ENCODE measurements at regions of chr3 and their contacts with region 1.

Region 1: GRCh38 chr3:138594150-138594934 is at the start of gene CEP70:
- DNase-seq: peak; percentile 88 to 94
- ATAC-seq: peak; percentile 96 to 97
- H3K4me3 ChIP-seq: peak within 1 kb of the TSS; percentile 63 to 86 (median 80)
- H3K27ac ChIP-seq: peak within 1 kb of the TSS; percentile 87 to 95 (median 92)
- H3K4me1 ChIP-seq: peaks cover 0 to 9% of the 10 kb centered on the region in 2 donors
- H3K27me3 ChIP-seq: no peaks in the 10 kb centered on the region
- CTCF ChIP-seq: peak; percentile 88 to 96 (median 91)
- POLR2A ChIP-seq: peak; percentile 87 to 94
- total RNA-seq, gene CEP70: 9.8 to 17.4 (median 12.3) TPM

Region 2: GRCh38 chr3:138186803-138187295 is 407.5 kb before region 1 on chr3:
- in situ Hi-C with region 1: no loop called
- intact Hi-C with region 1: loop called (anchors 5 kb)
- DNase-seq: peak; percentile 81 to 91
- ATAC-seq: peak; percentile 26 to 35
- H3K4me3 ChIP-seq: peak overlapping the region; percentile 72 to 99 (median 92)
- H3K27ac ChIP-seq: peak overlapping the region; percentile 92 to 99 (median 98)
- H3K4me1 ChIP-seq: peaks cover 36 to 38% of the 10 kb centered on the region in 2 donors
- H3K27me3 ChIP-seq: no peaks in the 10 kb centered on the region
- CTCF ChIP-seq: no peak
- POLR2A ChIP-seq: no peak

Region 3: DNA sequence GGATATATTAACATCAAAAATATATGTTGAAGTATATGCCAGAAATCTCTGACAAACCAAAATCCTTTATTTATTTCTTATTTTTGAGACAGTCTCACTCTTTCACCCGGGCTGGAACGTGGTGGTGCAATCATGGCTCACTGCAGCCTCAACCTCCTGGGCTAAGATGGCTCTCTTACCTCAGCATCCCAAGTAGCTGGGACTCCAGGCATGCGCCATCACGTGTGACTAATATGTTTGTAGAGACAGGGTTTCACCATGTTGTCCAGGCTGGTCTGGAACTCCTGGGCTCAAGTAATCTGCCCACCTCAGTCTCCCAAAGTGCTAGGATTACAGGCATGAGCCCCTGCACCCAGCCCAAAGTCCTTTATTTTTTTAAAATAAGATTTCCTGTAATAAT is 26.1 kb after region 1 on chr3:
- in situ Hi-C with region 1: no loop called
- intact Hi-C with region 1: no loop called
- DNase-seq: no peak
- ATAC-seq: no peak
- H3K4me3 ChIP-seq: no peak overlapping the region
- H3K27ac ChIP-seq: no peak overlapping the region
- H3K4me1 ChIP-seq: no peaks in the 10 kb centered on the region
- H3K27me3 ChIP-seq: no peaks in the 10 kb centered on the region
- CTCF ChIP-seq: no peak
- POLR2A ChIP-seq: no peak

Region 4: GRCh38 chr3:138834359-138835212 is 240.2 kb after region 1 on chr3 and contains the start of gene PIK3CB:
- in situ Hi-C with region 1: no loop called
- intact Hi-C with region 1: loop called (anchors 1 kb)
- DNase-seq: peak; percentile 81 to 88
- ATAC-seq: peak; percentile 80 to 82
- H3K4me3 ChIP-seq: peak within 1 kb of the TSS; percentile 63 to 91 (median 78)
- H3K27ac ChIP-seq: peak within 1 kb of the TSS; percentile 88 to 95 (median 93)
- H3K4me1 ChIP-seq: peaks cover 11 to 14% of the 10 kb centered on the region in 2 donors
- H3K27me3 ChIP-seq: no peaks in the 10 kb centered on the region
- CTCF ChIP-seq: peak; percentile 0 to 48 (median 31)
- POLR2A ChIP-seq: peak; percentile 89 to 91
- total RNA-seq, gene PIK3CB: 24.9 to 94.7 (median 36.8) TPM

Region 5: GRCh38 chr3:138923531-138923994 is 329.2 kb after region 1 on chr3:
- in situ Hi-C with region 1: loop called (anchors 5 to 10 kb)
- intact Hi-C with region 1: no loop called
- DNase-seq: peak; percentile 49 to 68
- ATAC-seq: peak; percentile 85 to 94
- H3K4me3 ChIP-seq: no peak overlapping the region
- H3K27ac ChIP-seq: no peak overlapping the region
- H3K4me1 ChIP-seq: no peaks in the 10 kb centered on the region
- H3K27me3 ChIP-seq: no peaks in the 10 kb centered on the region
- CTCF ChIP-seq: peak; percentile 66 to 93 (median 79)
- POLR2A ChIP-seq: no peak

Region 6: DNA sequence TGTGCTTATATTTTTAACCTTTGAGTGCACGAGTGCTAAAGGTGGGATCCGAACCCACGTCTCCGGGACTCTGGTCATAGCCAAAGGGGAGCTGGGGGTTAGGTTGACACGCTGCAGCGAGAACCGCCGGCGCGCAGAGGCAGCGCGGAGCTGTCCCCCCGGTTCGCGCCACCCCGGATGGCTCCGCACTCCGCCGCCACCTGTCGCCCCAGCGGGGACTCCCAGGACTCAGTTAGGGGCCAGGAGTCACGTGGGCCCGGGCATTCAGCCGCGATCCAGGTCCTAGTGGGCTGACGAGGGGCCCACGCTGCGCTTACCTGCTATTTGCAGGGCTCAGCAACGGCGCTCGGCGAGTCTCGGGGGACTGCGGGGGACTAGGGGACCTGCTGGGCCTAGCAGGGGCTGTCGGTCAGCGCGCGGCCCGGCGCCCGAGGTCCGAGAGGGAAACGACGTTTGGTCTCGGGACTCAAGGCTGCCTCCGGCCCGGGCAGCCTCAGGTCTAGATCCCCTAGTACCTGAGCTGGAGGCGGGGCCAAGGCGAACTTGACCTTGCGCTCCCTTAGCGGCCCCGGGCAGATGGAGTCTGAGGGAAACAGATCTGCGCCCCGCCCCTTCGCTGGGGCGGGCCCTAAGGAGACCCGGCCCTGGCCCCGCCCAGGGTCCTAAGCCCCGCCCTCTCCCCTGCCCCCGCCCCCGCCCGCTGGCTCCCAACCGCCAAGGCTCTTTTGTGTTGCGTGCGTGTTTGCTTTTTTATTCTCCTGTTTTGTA is 1083.2 kb after region 1 on chr3 and contains the start of gene NMNAT3:
- in situ Hi-C with region 1: no loop called
- intact Hi-C with region 1: loop called (anchors 5 kb)
- DNase-seq: peak; percentile 62 to 80
- ATAC-seq: peak; percentile 90 to 94
- H3K4me3 ChIP-seq: peak within 1 kb of the TSS; percentile 90 to 98 (median 95)
- H3K27ac ChIP-seq: peak within 1 kb of the TSS; percentile 87 to 92 (median 90)
- H3K4me1 ChIP-seq: peaks cover 9 to 16% of the 10 kb centered on the region in 2 donors
- H3K27me3 ChIP-seq: no peaks in the 10 kb centered on the region
- CTCF ChIP-seq: peak in 2 of 5 experiments; percentile 32 to 33
- POLR2A ChIP-seq: peak; percentile 23 to 34
- total RNA-seq, gene NMNAT3: 9.5 to 17.2 (median 12.8) TPM